ENCODE measurements at regions of chr18 and their contacts with region 1.

Region 1: GRCh38 chr18:48675352-48675761 is 136.5 kb downstream of the CTIF start:
- DNase-seq: peak; percentile 81
- H3K4me3 Mint-ChIP-seq: no peak overlapping the region
- H3K27ac Mint-ChIP-seq: no peak overlapping the region
- H3K4me1 Mint-ChIP-seq: no peaks in the 10 kb centered on the region
- H3K27me3 Mint-ChIP-seq: no peaks in the 10 kb centered on the region
- CTCF ChIP-seq: peak; percentile 94

Region 2: GRCh38 chr18:48336334-48336733 is 339.0 kb before region 1 on chr18:
- CTCF ChIA-PET with region 1: no interaction called
- POLR2A ChIA-PET with region 1: no interaction called
- intact Hi-C with region 1: no loop called
- DNase-seq: no peak
- H3K4me3 Mint-ChIP-seq: no peak overlapping the region
- H3K27ac Mint-ChIP-seq: no peak overlapping the region
- H3K4me1 Mint-ChIP-seq: no peaks in the 10 kb centered on the region
- H3K27me3 Mint-ChIP-seq: no peaks in the 10 kb centered on the region
- CTCF ChIP-seq: no peak

Region 3: GRCh38 chr18:48657447-48658120 is 17.8 kb before region 1 on chr18:
- CTCF ChIA-PET with region 1: no interaction called
- POLR2A ChIA-PET with region 1: no interaction called
- intact Hi-C with region 1: no loop called
- DNase-seq: no peak
- H3K4me3 Mint-ChIP-seq: no peak overlapping the region
- H3K27ac Mint-ChIP-seq: no peak overlapping the region
- H3K4me1 Mint-ChIP-seq: peaks cover 21% of the 10 kb centered on the region
- H3K27me3 Mint-ChIP-seq: no peaks in the 10 kb centered on the region
- CTCF ChIP-seq: no peak

Region 4: DNA sequence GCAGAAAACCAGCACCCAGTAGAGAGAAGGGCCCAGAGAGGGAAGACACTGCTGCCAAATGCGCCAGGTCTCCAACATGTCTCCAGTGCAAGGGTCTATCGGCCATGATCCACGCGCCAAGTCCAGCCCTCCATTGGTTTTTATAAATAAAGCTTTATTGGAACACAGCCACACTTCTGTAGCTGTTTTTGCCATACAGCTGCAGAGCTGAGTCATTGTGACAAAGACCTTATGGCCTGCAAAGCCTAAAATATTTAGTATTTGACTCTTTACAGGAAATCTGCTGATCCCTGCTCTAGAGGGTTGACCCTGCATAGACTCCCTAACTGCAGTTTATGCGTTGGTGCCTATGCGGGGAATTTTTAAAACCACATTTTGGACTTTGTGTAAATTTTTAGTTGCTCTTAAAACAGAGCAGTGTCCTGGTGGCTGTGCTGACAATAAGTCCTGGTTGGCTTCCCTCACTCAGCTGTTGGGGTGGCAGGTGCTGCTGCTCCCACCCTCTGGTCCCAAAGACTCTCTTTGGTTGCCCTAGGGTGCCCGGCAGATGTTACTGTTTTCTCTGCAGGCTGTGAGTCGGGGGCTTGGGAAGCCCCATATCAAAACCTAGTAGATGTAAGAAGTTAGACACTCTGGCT is 18.4 kb after region 1 on chr18:
- CTCF ChIA-PET with region 1: interaction called, 14 read pairs
- POLR2A ChIA-PET with region 1: no interaction called
- intact Hi-C with region 1: no loop called
- DNase-seq: no peak
- H3K4me3 Mint-ChIP-seq: no peak overlapping the region
- H3K27ac Mint-ChIP-seq: no peak overlapping the region
- H3K4me1 Mint-ChIP-seq: no peaks in the 10 kb centered on the region
- H3K27me3 Mint-ChIP-seq: no peaks in the 10 kb centered on the region
- CTCF ChIP-seq: no peak

Region 5: DNA sequence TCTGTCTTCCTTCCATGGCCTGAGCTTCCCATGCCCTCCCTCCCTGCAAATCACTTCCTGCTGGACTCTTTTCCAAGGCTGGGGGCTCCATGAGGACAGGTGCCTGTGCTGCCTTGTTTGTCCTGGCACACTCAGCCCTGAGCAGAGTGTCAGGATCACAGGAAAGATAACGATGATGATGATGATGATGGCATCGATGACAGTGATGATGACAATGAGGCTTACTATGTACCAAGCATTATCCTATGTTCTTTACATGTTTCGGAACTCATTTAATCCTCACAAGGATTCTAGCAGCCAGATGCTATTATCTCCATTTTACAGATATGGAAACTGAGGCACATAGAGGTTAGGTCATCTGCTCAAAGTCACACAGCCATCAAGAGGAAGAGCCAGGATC is 33.5 kb after region 1 on chr18:
- CTCF ChIA-PET with region 1: no interaction called
- POLR2A ChIA-PET with region 1: no interaction called
- intact Hi-C with region 1: no loop called
- DNase-seq: no peak
- H3K4me3 Mint-ChIP-seq: no peak overlapping the region
- H3K27ac Mint-ChIP-seq: no peak overlapping the region
- H3K4me1 Mint-ChIP-seq: no peaks in the 10 kb centered on the region
- H3K27me3 Mint-ChIP-seq: no peaks in the 10 kb centered on the region
- CTCF ChIP-seq: no peak

Region 6: GRCh38 chr18:48834413-48835031 is 159.2 kb after region 1 on chr18:
- CTCF ChIA-PET with region 1: no interaction called
- POLR2A ChIA-PET with region 1: no interaction called
- intact Hi-C with region 1: loop called (anchors 5 kb)
- DNase-seq: peak; percentile 96
- H3K4me3 Mint-ChIP-seq: peak overlapping the region; percentile 67
- H3K27ac Mint-ChIP-seq: peak overlapping the region; percentile 85
- H3K4me1 Mint-ChIP-seq: peaks cover 57% of the 10 kb centered on the region
- H3K27me3 Mint-ChIP-seq: no peaks in the 10 kb centered on the region
- CTCF ChIP-seq: no peak

Region 7: GRCh38 chr18:49178736-49179135 is 503.4 kb after region 1 on chr18:
- CTCF ChIA-PET with region 1: interaction called, 33 read pairs
- POLR2A ChIA-PET with region 1: no interaction called
- intact Hi-C with region 1: loop called (anchors 2 kb)
- DNase-seq: peak; percentile 30
- H3K4me3 Mint-ChIP-seq: no peak overlapping the region
- H3K27ac Mint-ChIP-seq: no peak overlapping the region
- H3K4me1 Mint-ChIP-seq: peaks cover 12% of the 10 kb centered on the region
- H3K27me3 Mint-ChIP-seq: no peaks in the 10 kb centered on the region
- CTCF ChIP-seq: peak; percentile 62

Region 8: DNA sequence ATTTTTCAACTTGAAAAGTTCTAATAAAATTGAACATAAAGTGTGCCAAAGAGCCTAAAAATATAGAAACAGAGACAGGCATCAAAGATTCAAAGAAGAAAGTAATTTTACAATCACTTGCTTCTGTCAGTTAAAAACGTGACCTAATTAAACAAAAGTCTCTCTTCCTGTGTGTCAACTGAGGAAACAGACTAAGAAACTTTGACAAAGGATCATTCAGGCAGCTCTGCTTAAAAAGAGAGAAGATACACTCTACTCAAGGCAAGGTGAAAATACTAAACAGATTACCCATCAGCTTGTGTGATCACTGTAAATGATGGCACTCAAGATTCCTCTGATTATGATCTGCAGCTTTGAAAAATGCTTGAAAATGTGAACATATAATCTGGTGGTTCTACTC is 737.3 kb after region 1 on chr18:
- CTCF ChIA-PET with region 1: interaction called, 3 read pairs
- POLR2A ChIA-PET with region 1: no interaction called
- intact Hi-C with region 1: loop called (anchors 1 kb)
- DNase-seq: no peak
- H3K4me3 Mint-ChIP-seq: no peak overlapping the region
- H3K27ac Mint-ChIP-seq: no peak overlapping the region
- H3K4me1 Mint-ChIP-seq: no peaks in the 10 kb centered on the region
- H3K27me3 Mint-ChIP-seq: no peaks in the 10 kb centered on the region
- CTCF ChIP-seq: no peak

Measured in MCF 10A (cell line).